H1 (cell line): ENCODE measurements at regions of chr7 and their contacts with region 1.

Region 1: GRCh38 chr7:6435486-6436384 is 12.0 kb downstream of the DAGLB start:
- DNase-seq: peak; percentile 56 to 95
- H3K4me3 ChIP-seq: no peak overlapping the region
- H3K27ac ChIP-seq: no peak overlapping the region; the same call in 1 of the 2 replicates
- H3K4me1 ChIP-seq: peaks cover 0 to 2% (median 0%) of the 10 kb centered on the region in 4 experiments; a peak in 2 of 7 replicates
- H3K27me3 ChIP-seq: no peaks in the 10 kb centered on the region
- CTCF ChIP-seq: peak; percentile 80 to 92 (median 85)
- EP300 ChIP-seq: no peak
- POLR2A ChIP-seq: no peak
- RAD21 ChIP-seq: peak; percentile 70 to 81

Region 2: GRCh38 chr7:6423942-6424701 is 11.6 kb before region 1 on chr7:
- CTCF ChIA-PET with region 1: interaction called, 11 read pairs
- POLR2A ChIA-PET with region 1: interaction called, 5 read pairs
- DNase-seq: no peak
- H3K4me3 ChIP-seq: no peak overlapping the region
- H3K27ac ChIP-seq: no peak overlapping the region
- H3K4me1 ChIP-seq: no peaks in the 10 kb centered on the region
- H3K27me3 ChIP-seq: no peaks in the 10 kb centered on the region
- CTCF ChIP-seq: peak in 1 of 3 experiments; percentile 23; a peak in 1 of 4 replicates
- EP300 ChIP-seq: no peak
- POLR2A ChIP-seq: no peak
- RAD21 ChIP-seq: peak in 1 of 2 experiments; percentile 34; a peak in 2 of 4 replicates

Region 3: GRCh38 chr7:6447581-6448199 is 12.0 kb after region 1 on chr7 and contains the start of gene DAGLB:
- CTCF ChIA-PET with region 1: interaction called, 7 read pairs
- POLR2A ChIA-PET with region 1: interaction called, 25 read pairs
- DNase-seq: peak; percentile 89 to 96
- H3K4me3 ChIP-seq: peak within 1 kb of the TSS; percentile 88 to 97 (median 92)
- H3K27ac ChIP-seq: peak within 1 kb of the TSS; percentile 76; the same call in 1 of the 2 replicates
- H3K4me1 ChIP-seq: no peaks in the 10 kb centered on the region; a peak in 1 of 7 replicates
- H3K27me3 ChIP-seq: no peaks in the 10 kb centered on the region
- CTCF ChIP-seq: no peak
- EP300 ChIP-seq: no peak
- POLR2A ChIP-seq: peak; percentile 61 to 90
- RAD21 ChIP-seq: no peak
- total RNA-seq, gene DAGLB: 22.1 and 27.0 TPM in 2 replicates